ENCODE measurements at regions of chr13 and their contacts with region 1.

Region 1: GRCh38 chr13:28324181-28324789 is 170.6 kb downstream of the FLT1 start:
- DNase-seq: peak; percentile 77
- ATAC-seq: peak; percentile 53
- H3K4me3 Mint-ChIP-seq: no peak overlapping the region
- H3K27ac Mint-ChIP-seq: no peak overlapping the region
- H3K4me1 Mint-ChIP-seq: peaks cover 4% of the 10 kb centered on the region
- H3K27me3 Mint-ChIP-seq: no peaks in the 10 kb centered on the region

Region 2: DNA sequence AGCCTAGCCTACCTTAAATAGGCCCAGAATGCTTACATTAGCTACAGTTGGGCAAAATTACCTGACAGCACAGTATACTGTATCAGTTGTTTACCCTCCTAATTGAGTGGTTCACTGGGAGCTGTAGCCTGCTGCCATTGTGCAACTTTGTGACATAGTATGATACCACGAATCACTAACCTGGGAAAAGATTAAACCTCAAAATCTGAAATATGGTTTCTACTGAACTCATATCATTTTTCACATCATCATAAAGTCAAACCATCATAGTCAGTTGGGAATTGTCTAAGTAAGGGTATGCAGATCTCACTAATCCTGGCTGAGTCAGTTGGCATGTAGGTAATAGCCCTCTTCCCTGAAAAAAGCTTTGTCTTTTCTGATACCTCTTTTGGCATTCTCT is 176.8 kb before region 1 on chr13:
- CTCF ChIA-PET with region 1: no interaction called
- POLR2A ChIA-PET with region 1: no interaction called
- DNase-seq: no peak
- ATAC-seq: no peak
- H3K4me3 Mint-ChIP-seq: no peak overlapping the region
- H3K27ac Mint-ChIP-seq: no peak overlapping the region
- H3K4me1 Mint-ChIP-seq: peaks cover 10% of the 10 kb centered on the region
- H3K27me3 Mint-ChIP-seq: no peaks in the 10 kb centered on the region

Region 3: DNA sequence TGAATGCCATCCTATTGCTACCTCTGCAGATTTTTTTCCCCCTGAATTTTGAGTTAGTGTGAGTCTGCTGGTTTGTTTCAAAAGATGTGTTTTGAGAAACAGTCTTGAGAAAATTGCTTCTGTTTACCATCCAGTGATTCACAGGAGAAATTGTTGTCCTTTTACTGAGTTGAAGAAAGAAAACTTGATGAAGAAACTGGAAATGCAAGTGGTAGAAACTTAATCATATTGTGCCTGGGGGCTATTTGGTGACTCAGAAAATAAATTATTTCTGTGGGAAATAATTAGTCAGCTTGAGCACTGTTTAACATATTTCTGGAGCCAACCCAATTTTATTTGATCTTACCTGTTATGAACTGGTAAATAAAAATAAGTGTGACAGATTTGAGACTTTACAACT is 150.5 kb before region 1 on chr13:
- CTCF ChIA-PET with region 1: no interaction called
- POLR2A ChIA-PET with region 1: no interaction called
- DNase-seq: no peak
- ATAC-seq: no peak
- H3K4me3 Mint-ChIP-seq: no peak overlapping the region
- H3K27ac Mint-ChIP-seq: no peak overlapping the region
- H3K4me1 Mint-ChIP-seq: no peaks in the 10 kb centered on the region
- H3K27me3 Mint-ChIP-seq: no peaks in the 10 kb centered on the region

Region 4: GRCh38 chr13:28297341-28297740 is 26.9 kb before region 1 on chr13:
- CTCF ChIA-PET with region 1: no interaction called
- POLR2A ChIA-PET with region 1: no interaction called
- DNase-seq: no peak
- ATAC-seq: no peak
- H3K4me3 Mint-ChIP-seq: no peak overlapping the region
- H3K27ac Mint-ChIP-seq: no peak overlapping the region
- H3K4me1 Mint-ChIP-seq: peaks cover 8% of the 10 kb centered on the region
- H3K27me3 Mint-ChIP-seq: no peaks in the 10 kb centered on the region

Region 5: GRCh38 chr13:28637714-28638355 is 313.6 kb after region 1 on chr13:
- CTCF ChIA-PET with region 1: interaction called, 10 read pairs
- POLR2A ChIA-PET with region 1: no interaction called
- DNase-seq: no peak
- ATAC-seq: no peak
- H3K4me3 Mint-ChIP-seq: no peak overlapping the region
- H3K27ac Mint-ChIP-seq: no peak overlapping the region
- H3K4me1 Mint-ChIP-seq: peaks cover 16% of the 10 kb centered on the region
- H3K27me3 Mint-ChIP-seq: peaks cover 13% of the 10 kb centered on the region

Region 6: DNA sequence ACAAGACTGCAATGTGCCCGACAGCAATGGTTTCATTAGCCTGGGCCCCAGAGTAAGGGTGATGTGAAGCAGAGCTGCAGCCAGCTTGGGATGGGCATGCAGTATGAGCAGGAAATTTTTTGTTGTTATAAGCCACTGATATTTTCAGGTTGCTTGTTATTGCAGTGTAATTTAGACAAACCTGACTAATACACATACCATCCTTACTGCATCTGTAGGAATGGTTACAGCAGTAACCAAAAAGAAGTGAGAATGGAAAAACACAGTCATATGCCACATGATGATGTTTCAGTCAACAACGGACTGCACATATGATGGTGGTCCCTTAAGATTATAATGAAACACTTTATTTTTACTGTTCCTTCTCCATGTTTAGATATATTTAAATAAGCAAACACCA is 326.0 kb after region 1 on chr13:
- CTCF ChIA-PET with region 1: interaction called, 10 read pairs
- POLR2A ChIA-PET with region 1: no interaction called
- DNase-seq: no peak
- ATAC-seq: no peak
- H3K4me3 Mint-ChIP-seq: no peak overlapping the region
- H3K27ac Mint-ChIP-seq: no peak overlapping the region
- H3K4me1 Mint-ChIP-seq: peaks cover 14% of the 10 kb centered on the region
- H3K27me3 Mint-ChIP-seq: no peaks in the 10 kb centered on the region

Region 7: GRCh38 chr13:28796938-28797257 is 472.6 kb after region 1 on chr13:
- CTCF ChIA-PET with region 1: interaction called, 10 read pairs
- POLR2A ChIA-PET with region 1: no interaction called
- DNase-seq: no peak
- ATAC-seq: no peak
- H3K4me3 Mint-ChIP-seq: no peak overlapping the region
- H3K27ac Mint-ChIP-seq: no peak overlapping the region
- H3K4me1 Mint-ChIP-seq: peaks cover 5% of the 10 kb centered on the region
- H3K27me3 Mint-ChIP-seq: peaks cover 30% of the 10 kb centered on the region

Measured in activated CD8-positive, alpha-beta T cell treated with anti-CD3 and anti-CD28 coated beads, Interleukin-2, amount 10 ng/mL, durations not matched to agents 7 days and 5 days (primary cell).